ENCODE measurements at regions of chr18 and their contacts with region 1.

Region 1: GRCh38 chr18:78857314-78858150 is 122.1 kb upstream of the SALL3 start:
- DNase-seq: no peak
- ATAC-seq: no peak
- H3K4me3 Mint-ChIP-seq: no peak overlapping the region
- H3K27ac Mint-ChIP-seq: no peak overlapping the region
- H3K4me1 Mint-ChIP-seq: no peaks in the 10 kb centered on the region
- H3K27me3 Mint-ChIP-seq: peaks cover 21% of the 10 kb centered on the region

Region 2: GRCh38 chr18:78914249-78914935 is 56.9 kb after region 1 on chr18:
- CTCF ChIA-PET with region 1: no interaction called
- POLR2A ChIA-PET with region 1: no interaction called
- intact Hi-C with region 1: loop called in 1 of 2 experiments (anchors 10 kb)
- DNase-seq: no peak
- ATAC-seq: no peak
- H3K4me3 Mint-ChIP-seq: no peak overlapping the region
- H3K27ac Mint-ChIP-seq: no peak overlapping the region
- H3K4me1 Mint-ChIP-seq: no peaks in the 10 kb centered on the region
- H3K27me3 Mint-ChIP-seq: peaks cover 8% of the 10 kb centered on the region